T-cell (primary cell): ENCODE measurements at regions of chr1 and their contacts with region 1.

Region 1: GRCh38 chr1:26102526-26102925 is 9.1 kb upstream of the PDIK1L start:
- DNase-seq: no peak
- ATAC-seq: no peak
- H3K4me3 ChIP-seq: no peak overlapping the region
- H3K4me3 Mint-ChIP-seq: no peak overlapping the region
- H3K27ac ChIP-seq: no peak overlapping the region
- H3K27ac Mint-ChIP-seq: no peak overlapping the region
- H3K4me1 ChIP-seq: no peaks in the 10 kb centered on the region
- H3K4me1 Mint-ChIP-seq: peaks cover 5 to 10% (median 7%) of the 10 kb centered on the region in 3 donors
- H3K27me3 ChIP-seq: peaks cover 3 to 10% of the 10 kb centered on the region in 2 experiments
- H3K27me3 Mint-ChIP-seq: peaks cover 4 to 5% of the 10 kb centered on the region in 2 donors

Region 2: GRCh38 chr1:26145041-26145959 is 42.8 kb after region 1 on chr1:
- CTCF ChIA-PET with region 1: interaction called, 9 to 59 read pairs
- POLR2A ChIA-PET with region 1: interaction called in 1 of 2 experiments, 7 read pairs
- DNase-seq: peak; percentile 28 to 88 (median 65)
- ATAC-seq: peak; percentile 81 to 96 (median 88)
- H3K4me3 ChIP-seq: no peak overlapping the region
- H3K4me3 Mint-ChIP-seq: no peak overlapping the region
- H3K27ac ChIP-seq: no peak overlapping the region
- H3K27ac Mint-ChIP-seq: peak overlapping the region in 1 of 2 donors; percentile 61
- H3K4me1 ChIP-seq: peaks cover 0 to 3% of the 10 kb centered on the region in 2 experiments
- H3K4me1 Mint-ChIP-seq: peaks cover 6 to 7% (median 6%) of the 10 kb centered on the region in 3 donors
- H3K27me3 ChIP-seq: peaks cover 0 to 21% of the 10 kb centered on the region in 2 experiments
- H3K27me3 Mint-ChIP-seq: peaks cover 4 to 14% of the 10 kb centered on the region in 2 donors